Caco-2 (cell line): ENCODE measurements at regions of chr18 and their contacts with region 1.

Region 1: GRCh38 chr18:62186774-62187542 is at the starts of genes PIGN and RELCH:
- DNase-seq: peak; percentile 89 to 94
- H3K4me3 ChIP-seq: peak within 1 kb of the TSS; percentile 93
- H3K4me3 Mint-ChIP-seq: peak within 1 kb of the TSS; percentile 98
- H3K27ac Mint-ChIP-seq: peak within 1 kb of the TSS; percentile 96
- H3K4me1 ChIP-seq: no peaks in the 10 kb centered on the region
- H3K4me1 Mint-ChIP-seq: no peaks in the 10 kb centered on the region
- H3K27me3 ChIP-seq: no peaks in the 10 kb centered on the region
- H3K27me3 Mint-ChIP-seq: no peaks in the 10 kb centered on the region
- CTCF ChIP-seq: no peak
- total RNA-seq, gene PIGN: 22.8 and 23.4 TPM in 2 replicates
- total RNA-seq, gene RELCH: 16.8 and 19.6 TPM in 2 replicates

Region 2: GRCh38 chr18:62175521-62175920 is 11.4 kb before region 1 on chr18:
- CTCF ChIA-PET with region 1: no interaction called
- POLR2A ChIA-PET with region 1: no interaction called
- intact Hi-C with region 1: no loop called
- DNase-seq: no peak
- H3K4me3 ChIP-seq: no peak overlapping the region
- H3K4me3 Mint-ChIP-seq: no peak overlapping the region
- H3K27ac Mint-ChIP-seq: no peak overlapping the region
- H3K4me1 ChIP-seq: no peaks in the 10 kb centered on the region
- H3K4me1 Mint-ChIP-seq: no peaks in the 10 kb centered on the region
- H3K27me3 ChIP-seq: no peaks in the 10 kb centered on the region
- H3K27me3 Mint-ChIP-seq: no peaks in the 10 kb centered on the region
- CTCF ChIP-seq: no peak

Region 3: GRCh38 chr18:62200121-62200914 is 13.4 kb after region 1 on chr18:
- CTCF ChIA-PET with region 1: no interaction called
- POLR2A ChIA-PET with region 1: interaction called, 3 read pairs
- intact Hi-C with region 1: loop called (anchors 2 kb)
- DNase-seq: no peak
- H3K4me3 ChIP-seq: no peak overlapping the region
- H3K4me3 Mint-ChIP-seq: no peak overlapping the region
- H3K27ac Mint-ChIP-seq: no peak overlapping the region
- H3K4me1 ChIP-seq: peaks cover 10% of the 10 kb centered on the region
- H3K4me1 Mint-ChIP-seq: no peaks in the 10 kb centered on the region
- H3K27me3 ChIP-seq: no peaks in the 10 kb centered on the region
- H3K27me3 Mint-ChIP-seq: no peaks in the 10 kb centered on the region
- CTCF ChIP-seq: no peak

Region 4: GRCh38 chr18:62224229-62224628 is 37.3 kb after region 1 on chr18:
- CTCF ChIA-PET with region 1: no interaction called
- POLR2A ChIA-PET with region 1: no interaction called
- intact Hi-C with region 1: no loop called
- DNase-seq: no peak
- H3K4me3 ChIP-seq: no peak overlapping the region
- H3K4me3 Mint-ChIP-seq: no peak overlapping the region
- H3K27ac Mint-ChIP-seq: no peak overlapping the region
- H3K4me1 ChIP-seq: no peaks in the 10 kb centered on the region
- H3K4me1 Mint-ChIP-seq: no peaks in the 10 kb centered on the region
- H3K27me3 ChIP-seq: no peaks in the 10 kb centered on the region
- H3K27me3 Mint-ChIP-seq: no peaks in the 10 kb centered on the region
- CTCF ChIP-seq: no peak

Region 5: DNA sequence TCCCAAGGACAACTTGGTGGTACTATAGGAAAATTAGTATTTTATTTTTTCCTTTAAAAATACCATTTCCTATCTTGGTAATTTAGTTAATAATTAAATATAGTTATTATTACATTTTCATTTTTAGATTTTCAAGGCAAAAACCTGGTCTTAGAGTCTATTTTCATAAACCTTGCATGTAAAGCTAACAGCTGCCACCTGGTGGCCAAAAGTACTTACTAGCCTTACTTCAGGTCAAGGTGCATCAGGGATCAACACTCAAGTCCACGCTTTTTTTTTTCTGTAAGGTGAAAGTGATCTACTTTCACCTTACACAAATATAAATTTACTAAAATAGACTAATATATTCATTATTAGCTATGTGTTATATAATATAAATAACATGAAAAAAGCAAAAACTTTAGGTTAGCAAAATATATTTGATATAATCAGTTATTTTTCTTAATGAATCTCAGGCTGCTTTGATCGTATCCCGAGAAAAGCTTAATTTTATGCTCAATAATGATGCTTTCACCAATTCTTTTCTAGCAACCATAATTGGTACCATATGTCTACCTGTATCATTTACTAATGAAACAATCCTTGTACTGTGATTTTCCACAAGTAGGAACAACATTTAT is 62.6 kb after region 1 on chr18:
- CTCF ChIA-PET with region 1: interaction called, 5 read pairs
- POLR2A ChIA-PET with region 1: no interaction called
- intact Hi-C with region 1: loop called (anchors 1 kb)
- DNase-seq: peak; percentile 56 to 58
- H3K4me3 ChIP-seq: no peak overlapping the region
- H3K4me3 Mint-ChIP-seq: no peak overlapping the region
- H3K27ac Mint-ChIP-seq: no peak overlapping the region
- H3K4me1 ChIP-seq: no peaks in the 10 kb centered on the region
- H3K4me1 Mint-ChIP-seq: no peaks in the 10 kb centered on the region
- H3K27me3 ChIP-seq: no peaks in the 10 kb centered on the region
- H3K27me3 Mint-ChIP-seq: no peaks in the 10 kb centered on the region
- CTCF ChIP-seq: peak; percentile 54 to 56

Region 6: GRCh38 chr18:62522504-62523254 is 335.7 kb after region 1 on chr18 and contains the start of gene ZCCHC2:
- CTCF ChIA-PET with region 1: no interaction called
- POLR2A ChIA-PET with region 1: interaction called, 8 read pairs
- intact Hi-C with region 1: loop called (anchors 10 kb)
- DNase-seq: peak; percentile 93 to 95
- H3K4me3 ChIP-seq: peak within 1 kb of the TSS; percentile 69
- H3K4me3 Mint-ChIP-seq: peak within 1 kb of the TSS; percentile 76
- H3K27ac Mint-ChIP-seq: no peak within 1 kb of the TSS
- H3K4me1 ChIP-seq: peaks cover 10% of the 10 kb centered on the region
- H3K4me1 Mint-ChIP-seq: no peaks in the 10 kb centered on the region
- H3K27me3 ChIP-seq: no peaks in the 10 kb centered on the region
- H3K27me3 Mint-ChIP-seq: no peaks in the 10 kb centered on the region
- CTCF ChIP-seq: no peak
- total RNA-seq, gene ZCCHC2: 6.9 and 8.9 TPM in 2 replicates